Dendritic cell treated with granulocyte-macrophage colony-stimulating factor and Interleukin-4, amounts not matched to agents 40 ng/mL and 50 ng/mL, for 4 days (primary cell): ENCODE measurements at regions of chr12 and their contacts with region 1.

Region 1: GRCh38 chr12:104381731-104382480 is 74.8 kb upstream of the CHST11 start:
- H3K4me3 Mint-ChIP-seq: no peak overlapping the region
- H3K27ac Mint-ChIP-seq: peak overlapping the region; percentile 44
- H3K4me1 Mint-ChIP-seq: peaks cover 11% of the 10 kb centered on the region
- H3K27me3 Mint-ChIP-seq: peaks cover 6% of the 10 kb centered on the region

Region 2: DNA sequence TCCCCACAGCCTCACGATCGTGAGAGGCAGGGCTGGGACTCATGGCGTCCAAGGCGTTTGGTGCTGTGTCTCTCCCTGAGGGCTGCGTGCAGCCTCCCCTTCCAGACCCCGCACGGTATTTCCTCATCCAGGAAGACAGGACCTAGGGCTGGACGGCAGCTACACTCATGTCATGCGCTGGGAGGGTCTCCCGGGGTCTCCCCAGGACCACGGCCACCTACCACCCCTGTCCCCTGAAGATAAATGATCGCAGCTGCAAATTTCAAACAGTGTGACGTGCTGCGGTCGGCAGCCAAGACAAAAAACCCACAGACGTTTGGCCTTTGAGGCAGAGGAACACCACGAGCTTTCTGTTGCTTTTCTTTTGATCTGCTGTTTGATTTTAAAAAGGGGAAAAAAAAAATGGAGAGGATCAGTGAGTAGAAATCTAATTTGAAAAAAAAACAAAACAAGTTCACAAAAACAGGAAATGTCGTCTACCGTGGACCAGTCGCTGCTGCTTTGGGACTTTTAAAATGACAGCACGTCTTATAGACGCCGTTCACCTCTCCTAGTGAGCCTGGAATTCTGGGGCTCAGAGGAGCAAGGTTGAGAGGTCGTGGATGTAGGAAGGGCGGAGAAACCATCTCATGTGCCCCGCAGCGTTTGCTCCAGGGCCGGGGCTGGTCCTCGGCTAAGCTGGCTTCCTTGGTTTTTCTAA is 338.6 kb after region 1 on chr12:
- intact Hi-C with region 1: loop called (anchors 10 kb)
- H3K4me3 Mint-ChIP-seq: peak overlapping the region; percentile 72
- H3K27ac Mint-ChIP-seq: peak overlapping the region; percentile 94
- H3K4me1 Mint-ChIP-seq: peaks cover 62% of the 10 kb centered on the region
- H3K27me3 Mint-ChIP-seq: no peaks in the 10 kb centered on the region

Region 3: DNA sequence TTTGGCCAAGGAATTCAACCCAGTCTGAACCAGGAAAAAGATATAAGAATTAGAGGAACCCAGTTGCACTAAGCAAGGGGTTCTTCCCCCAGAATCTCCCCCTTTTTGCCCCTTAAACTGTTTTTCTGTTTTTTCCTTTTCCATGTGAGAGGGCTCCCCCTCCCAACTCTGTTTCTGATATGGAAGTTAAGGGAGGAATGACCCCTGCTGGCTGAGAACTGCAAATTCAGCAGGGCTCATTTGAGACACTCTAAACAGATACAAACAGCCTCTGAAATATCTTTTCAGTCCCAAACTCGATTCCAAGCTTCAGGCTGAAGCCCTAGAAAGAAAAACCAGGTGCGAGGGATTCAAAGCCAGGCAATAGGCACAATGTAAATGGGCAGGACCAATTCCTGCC is 443.5 kb after region 1 on chr12:
- intact Hi-C with region 1: loop called (anchors 5 kb)
- H3K4me3 Mint-ChIP-seq: no peak overlapping the region
- H3K27ac Mint-ChIP-seq: no peak overlapping the region
- H3K4me1 Mint-ChIP-seq: no peaks in the 10 kb centered on the region
- H3K27me3 Mint-ChIP-seq: no peaks in the 10 kb centered on the region

Region 4: GRCh38 chr12:104877123-104877705 is 495.3 kb after region 1 on chr12:
- intact Hi-C with region 1: loop called (anchors 2 kb)
- H3K4me3 Mint-ChIP-seq: no peak overlapping the region
- H3K27ac Mint-ChIP-seq: no peak overlapping the region
- H3K4me1 Mint-ChIP-seq: peaks cover 6% of the 10 kb centered on the region
- H3K27me3 Mint-ChIP-seq: no peaks in the 10 kb centered on the region